Endothelial cell of umbilical vein (primary cell): ENCODE measurements at regions of chr3 and their contacts with region 1.

Region 1: GRCh38 chr3:4722103-4722502 is 229.0 kb downstream of the ITPR1 start:
- DNase-seq: peak; percentile 81
- H3K4me3 ChIP-seq: no peak overlapping the region
- H3K27ac ChIP-seq: peak overlapping the region; percentile 1
- H3K4me1 ChIP-seq: no peaks in the 10 kb centered on the region
- H3K27me3 ChIP-seq: no peaks in the 10 kb centered on the region
- CTCF ChIP-seq: peak; percentile 40 to 57
- POLR2A ChIP-seq: no peak

Region 2: DNA sequence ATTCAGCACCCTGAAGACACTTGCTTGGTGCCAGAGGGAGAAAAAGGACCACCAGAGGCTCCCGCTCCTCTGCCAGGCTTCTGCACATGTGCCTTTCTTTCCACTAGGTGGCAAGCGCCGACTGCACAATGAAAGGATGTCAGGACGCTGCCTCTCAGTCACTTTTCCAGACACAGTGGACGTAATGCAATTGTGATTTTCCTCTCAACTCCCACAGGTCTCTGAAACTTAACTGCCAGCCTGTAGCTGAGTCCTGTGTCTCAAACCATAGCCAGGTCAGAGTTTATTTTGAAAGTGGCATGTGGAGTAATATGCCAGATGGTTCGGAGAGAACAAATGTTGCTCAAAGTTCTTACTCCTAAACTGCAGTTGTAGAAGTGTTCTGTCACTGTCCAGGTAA is 66.0 kb before region 1 on chr3:
- CTCF ChIA-PET with region 1: interaction called, 10 read pairs
- POLR2A ChIA-PET with region 1: no interaction called
- dilution Hi-C with region 1: no loop called
- intact Hi-C with region 1: no loop called
- DNase-seq: peak; percentile 81
- H3K4me3 ChIP-seq: no peak overlapping the region
- H3K27ac ChIP-seq: peak overlapping the region; percentile 48
- H3K4me1 ChIP-seq: peaks cover 11% of the 10 kb centered on the region
- H3K27me3 ChIP-seq: no peaks in the 10 kb centered on the region
- CTCF ChIP-seq: peak; percentile 91 to 92
- POLR2A ChIP-seq: no peak

Region 3: DNA sequence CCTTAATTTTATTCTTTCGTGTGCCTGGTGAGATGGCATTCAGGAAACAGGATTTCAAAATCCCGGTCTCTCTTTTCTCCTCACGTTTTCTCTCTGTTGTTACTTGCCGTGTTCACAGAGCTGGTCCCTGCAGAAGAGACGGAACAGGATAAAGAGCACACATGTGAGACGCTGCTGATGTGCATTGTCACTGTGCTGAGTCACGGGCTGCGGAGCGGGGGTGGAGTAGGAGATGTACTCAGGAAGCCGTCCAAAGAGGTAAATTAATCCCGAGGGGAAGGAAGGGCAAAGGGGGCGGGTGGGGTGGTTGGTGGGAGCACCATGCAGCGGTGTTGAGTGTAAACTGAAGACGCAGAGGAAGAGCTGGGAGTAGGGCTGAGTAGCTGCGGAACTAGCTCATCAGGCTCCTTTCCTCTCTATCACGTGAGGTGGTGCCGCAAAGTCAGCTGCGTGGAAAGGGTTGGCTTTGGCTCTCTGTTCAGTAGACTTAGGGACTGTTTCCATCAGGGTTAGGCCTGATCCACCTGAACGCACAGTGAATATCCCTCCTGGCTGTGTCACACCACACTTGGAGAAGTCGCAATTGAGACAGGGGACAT is 92.3 kb after region 1 on chr3:
- CTCF ChIA-PET with region 1: interaction called, 13 read pairs
- POLR2A ChIA-PET with region 1: no interaction called
- dilution Hi-C with region 1: no loop called
- intact Hi-C with region 1: loop called (anchors 1 kb)
- DNase-seq: peak; percentile 85
- H3K4me3 ChIP-seq: no peak overlapping the region
- H3K27ac ChIP-seq: peak overlapping the region; percentile 74
- H3K4me1 ChIP-seq: peaks cover 18% of the 10 kb centered on the region
- H3K27me3 ChIP-seq: no peaks in the 10 kb centered on the region
- CTCF ChIP-seq: no peak
- POLR2A ChIP-seq: no peak

Region 4: DNA sequence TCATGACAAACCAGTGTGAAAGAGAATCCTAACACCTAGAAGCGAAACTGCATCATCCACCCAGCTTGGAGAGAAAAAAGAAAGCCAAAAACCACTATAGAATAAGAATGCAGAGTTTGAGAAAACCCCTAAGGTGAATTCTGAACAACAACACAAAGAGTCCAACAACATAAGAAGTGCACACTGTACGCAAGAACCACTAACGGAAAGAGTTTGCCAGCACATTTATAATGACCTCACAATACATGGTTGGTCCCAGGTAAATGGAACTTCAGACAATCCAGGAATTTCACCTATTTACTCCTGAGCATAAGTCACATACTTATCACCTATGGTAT is 128.8 kb after region 1 on chr3:
- CTCF ChIA-PET with region 1: interaction called, 11 read pairs
- POLR2A ChIA-PET with region 1: no interaction called
- dilution Hi-C with region 1: no loop called
- intact Hi-C with region 1: loop called (anchors 1 kb)
- DNase-seq: no peak
- H3K4me3 ChIP-seq: no peak overlapping the region
- H3K27ac ChIP-seq: no peak overlapping the region
- H3K4me1 ChIP-seq: peaks cover 32% of the 10 kb centered on the region
- H3K27me3 ChIP-seq: no peaks in the 10 kb centered on the region
- CTCF ChIP-seq: no peak
- POLR2A ChIP-seq: no peak

Region 5: GRCh38 chr3:4956738-4957137 is 234.6 kb after region 1 on chr3:
- CTCF ChIA-PET with region 1: no interaction called
- POLR2A ChIA-PET with region 1: no interaction called
- dilution Hi-C with region 1: no loop called
- intact Hi-C with region 1: no loop called
- DNase-seq: no peak
- H3K4me3 ChIP-seq: no peak overlapping the region
- H3K27ac ChIP-seq: no peak overlapping the region
- H3K4me1 ChIP-seq: no peaks in the 10 kb centered on the region
- H3K27me3 ChIP-seq: no peaks in the 10 kb centered on the region
- CTCF ChIP-seq: no peak
- POLR2A ChIP-seq: no peak

Region 6: GRCh38 chr3:5016218-5017161 is 294.4 kb after region 1 on chr3:
- CTCF ChIA-PET with region 1: interaction called, 121 read pairs
- POLR2A ChIA-PET with region 1: no interaction called
- dilution Hi-C with region 1: no loop called
- intact Hi-C with region 1: no loop called
- DNase-seq: peak; percentile 85
- H3K4me3 ChIP-seq: no peak overlapping the region
- H3K27ac ChIP-seq: peak overlapping the region; percentile 86
- H3K4me1 ChIP-seq: peaks cover 35% of the 10 kb centered on the region
- H3K27me3 ChIP-seq: no peaks in the 10 kb centered on the region
- CTCF ChIP-seq: no peak
- POLR2A ChIP-seq: peak; percentile 34

Region 7: GRCh38 chr3:5057857-5058324 is 335.8 kb after region 1 on chr3:
- CTCF ChIA-PET with region 1: interaction called, 98 read pairs
- POLR2A ChIA-PET with region 1: no interaction called
- dilution Hi-C with region 1: no loop called
- intact Hi-C with region 1: loop called (anchors 1 kb)
- DNase-seq: peak; percentile 85
- H3K4me3 ChIP-seq: no peak overlapping the region
- H3K27ac ChIP-seq: no peak overlapping the region
- H3K4me1 ChIP-seq: no peaks in the 10 kb centered on the region
- H3K27me3 ChIP-seq: peaks cover 0 to 2% of the 10 kb centered on the region in 2 experiments
- CTCF ChIP-seq: peak; percentile 59 to 65
- POLR2A ChIP-seq: no peak